CD14-positive monocyte (primary cell): ENCODE measurements at regions of chr10 and their contacts with region 1.

Region 1: DNA sequence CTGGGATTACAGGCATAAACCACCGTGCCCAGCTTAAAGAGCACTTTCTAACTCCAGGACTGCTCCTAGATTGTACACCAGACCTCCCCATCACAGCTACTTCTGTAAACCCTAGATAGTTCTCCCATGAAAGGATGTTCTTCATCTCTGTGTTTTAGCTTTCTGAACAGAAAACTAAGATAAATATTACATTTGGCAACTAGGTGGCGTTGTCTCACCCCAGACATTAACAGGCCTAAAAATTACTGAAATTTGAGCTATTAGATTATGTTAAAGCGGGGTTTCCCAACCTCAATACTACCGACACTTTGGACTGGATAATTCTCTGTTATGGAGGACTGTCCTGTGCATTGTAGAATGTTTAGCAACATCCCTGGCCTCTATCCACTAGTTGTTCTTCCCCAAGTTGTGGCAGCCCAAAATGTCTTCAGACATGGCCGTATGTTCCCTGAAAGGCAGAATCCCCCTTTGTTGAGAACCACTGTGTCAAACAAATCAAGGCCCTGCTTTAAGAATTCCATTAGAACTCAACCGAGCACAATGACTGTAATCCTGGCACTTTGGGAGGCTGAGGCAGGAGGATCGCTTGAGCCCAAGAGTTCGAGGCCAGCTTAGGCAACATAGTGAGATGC is 19.1 kb downstream of the ATOH7 start:
- DNase-seq: peak in 2 of 3 donors; percentile 35 to 37
- H3K4me3 ChIP-seq: no peak overlapping the region
- H3K4me3 Mint-ChIP-seq: no peak overlapping the region
- H3K27ac ChIP-seq: no peak overlapping the region
- H3K27ac Mint-ChIP-seq: no peak overlapping the region
- H3K4me1 ChIP-seq: no peaks in the 10 kb centered on the region
- H3K4me1 Mint-ChIP-seq: no peaks in the 10 kb centered on the region
- H3K27me3 ChIP-seq: no peaks in the 10 kb centered on the region
- H3K27me3 Mint-ChIP-seq: peaks cover 3 to 9% (median 7%) of the 10 kb centered on the region in 3 donors
- CTCF ChIP-seq: peak; percentile 77

Region 2: DNA sequence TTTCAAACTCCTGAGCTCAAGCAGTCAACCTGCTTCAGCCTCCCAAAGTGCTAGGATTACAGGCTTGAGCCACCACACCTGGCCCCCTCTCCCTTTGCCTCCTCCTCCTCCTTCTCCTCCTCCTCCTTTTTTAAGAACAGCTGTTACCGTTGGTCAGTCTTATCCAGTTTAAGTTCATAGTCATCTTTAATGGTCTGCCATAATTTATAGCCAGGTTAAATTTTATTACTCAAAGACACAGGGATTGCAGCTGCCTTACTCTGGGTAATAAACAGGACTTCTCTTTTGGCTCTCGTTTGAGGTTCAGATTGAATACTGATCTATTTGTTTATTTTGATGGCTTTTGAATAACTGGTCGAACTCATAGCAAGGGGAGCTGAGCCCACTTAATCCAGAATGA is 16.1 kb before region 1 on chr10:
- intact Hi-C with region 1: no loop called
- DNase-seq: no peak
- H3K4me3 ChIP-seq: no peak overlapping the region
- H3K4me3 Mint-ChIP-seq: no peak overlapping the region
- H3K27ac ChIP-seq: no peak overlapping the region
- H3K27ac Mint-ChIP-seq: no peak overlapping the region
- H3K4me1 ChIP-seq: peaks cover under 1 to 1% of the 10 kb centered on the region in 2 donors
- H3K4me1 Mint-ChIP-seq: no peaks in the 10 kb centered on the region
- H3K27me3 ChIP-seq: no peaks in the 10 kb centered on the region
- H3K27me3 Mint-ChIP-seq: peaks cover 4 to 10% (median 5%) of the 10 kb centered on the region in 3 donors
- CTCF ChIP-seq: no peak

Region 3: GRCh38 chr10:68301790-68302502 is 89.1 kb after region 1 on chr10:
- intact Hi-C with region 1: loop called (anchors 5 kb)
- DNase-seq: peak; percentile 18 to 56 (median 37)
- H3K4me3 ChIP-seq: peak overlapping the region in 1 of 3 experiments; percentile 20
- H3K4me3 Mint-ChIP-seq: peak overlapping the region in 1 of 2 donors; percentile 65
- H3K27ac ChIP-seq: no peak overlapping the region
- H3K27ac Mint-ChIP-seq: peak overlapping the region in 5 of 7 donors; percentile 26 to 83 (median 53)
- H3K4me1 ChIP-seq: peaks cover 25 to 26% of the 10 kb centered on the region in 2 donors
- H3K4me1 Mint-ChIP-seq: peaks cover 24% of the 10 kb centered on the region
- H3K27me3 ChIP-seq: no peaks in the 10 kb centered on the region
- H3K27me3 Mint-ChIP-seq: peaks cover 0 to 2% (median 0%) of the 10 kb centered on the region in 3 donors
- CTCF ChIP-seq: peak; percentile 72

Region 4: DNA sequence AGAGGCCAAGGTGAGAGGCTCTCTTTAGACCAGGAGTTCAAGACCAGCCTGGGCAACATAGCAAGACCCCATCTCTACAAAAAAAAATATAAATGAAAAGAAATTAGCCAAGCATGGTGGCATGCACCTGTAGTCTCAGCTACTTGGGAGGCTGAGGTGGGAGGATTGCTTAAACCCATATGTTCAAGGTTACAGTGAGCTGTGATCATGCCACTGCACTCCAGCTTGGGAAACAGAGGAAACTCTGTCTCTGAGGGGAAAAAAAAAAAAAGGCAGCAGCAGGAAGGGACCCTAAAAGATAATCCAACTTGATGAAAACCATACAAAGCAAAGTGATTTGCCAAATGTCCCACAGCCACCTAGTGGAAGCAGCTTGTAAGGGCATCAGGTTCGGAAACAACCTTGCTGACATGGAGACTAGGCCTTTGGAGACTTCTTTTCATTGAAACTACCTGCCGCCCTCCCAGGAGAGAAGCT is 135.5 kb after region 1 on chr10:
- intact Hi-C with region 1: loop called in 1 of 2 experiments (anchors 5 kb)
- DNase-seq: peak; percentile 23 to 45 (median 42)
- H3K4me3 ChIP-seq: no peak overlapping the region
- H3K4me3 Mint-ChIP-seq: no peak overlapping the region
- H3K27ac ChIP-seq: no peak overlapping the region
- H3K27ac Mint-ChIP-seq: peak overlapping the region in 3 of 7 donors; percentile 32 to 40 (median 32)
- H3K4me1 ChIP-seq: no peaks in the 10 kb centered on the region
- H3K4me1 Mint-ChIP-seq: no peaks in the 10 kb centered on the region
- H3K27me3 ChIP-seq: no peaks in the 10 kb centered on the region
- H3K27me3 Mint-ChIP-seq: no peaks in the 10 kb centered on the region
- CTCF ChIP-seq: peak; percentile 89